ENCODE measurements at regions of chr1 and their contacts with region 1.

Region 1: GRCh38 chr1:172745014-172745413 is 86.1 kb downstream of the FASLG start:
- DNase-seq: no peak
- ATAC-seq: peak; percentile 50 to 64
- H3K4me3 ChIP-seq: no peak overlapping the region
- H3K27ac ChIP-seq: peak overlapping the region in 3 of 4 donors; percentile 63 to 71 (median 68)
- H3K4me1 ChIP-seq: no peaks in the 10 kb centered on the region
- H3K27me3 ChIP-seq: no peaks in the 10 kb centered on the region
- CTCF ChIP-seq: peak in 3 of 5 experiments; percentile 34 to 43 (median 37)
- POLR2A ChIP-seq: no peak

Region 2: GRCh38 chr1:172826096-172826743 is 81.2 kb after region 1 on chr1:
- in situ Hi-C with region 1: loop called in 2 of 4 experiments (anchors 5 to 10 kb)
- intact Hi-C with region 1: loop called (anchors 2 kb)
- DNase-seq: peak; percentile 32 to 37
- ATAC-seq: peak; percentile 73 to 81
- H3K4me3 ChIP-seq: peak overlapping the region in 2 of 4 donors; percentile 10 to 18
- H3K27ac ChIP-seq: peak overlapping the region; percentile 62 to 76 (median 66)
- H3K4me1 ChIP-seq: no peaks in the 10 kb centered on the region
- H3K27me3 ChIP-seq: no peaks in the 10 kb centered on the region
- CTCF ChIP-seq: peak in 3 of 5 experiments; percentile 29 to 43 (median 35)
- POLR2A ChIP-seq: peak in 1 of 2 donors; percentile 34

Region 3: GRCh38 chr1:173195596-173196088 is 450.6 kb after region 1 on chr1:
- in situ Hi-C with region 1: loop called (anchors 5 to 25 kb)
- intact Hi-C with region 1: no loop called
- DNase-seq: no peak
- ATAC-seq: no peak
- H3K4me3 ChIP-seq: no peak overlapping the region
- H3K27ac ChIP-seq: no peak overlapping the region
- H3K4me1 ChIP-seq: peaks cover 2 to 9% of the 10 kb centered on the region in 2 donors
- H3K27me3 ChIP-seq: no peaks in the 10 kb centered on the region
- CTCF ChIP-seq: no peak
- POLR2A ChIP-seq: no peak

Region 4: GRCh38 chr1:173202430-173203145 is 457.6 kb after region 1 on chr1:
- in situ Hi-C with region 1: loop called (anchors 5 to 25 kb)
- intact Hi-C with region 1: loop called (anchors 1 kb)
- DNase-seq: no peak
- ATAC-seq: peak in 1 of 2 donors; percentile 57
- H3K4me3 ChIP-seq: no peak overlapping the region
- H3K27ac ChIP-seq: no peak overlapping the region
- H3K4me1 ChIP-seq: no peaks in the 10 kb centered on the region
- H3K27me3 ChIP-seq: no peaks in the 10 kb centered on the region
- CTCF ChIP-seq: peak; percentile 15 to 54 (median 35)
- POLR2A ChIP-seq: no peak

Region 5: DNA sequence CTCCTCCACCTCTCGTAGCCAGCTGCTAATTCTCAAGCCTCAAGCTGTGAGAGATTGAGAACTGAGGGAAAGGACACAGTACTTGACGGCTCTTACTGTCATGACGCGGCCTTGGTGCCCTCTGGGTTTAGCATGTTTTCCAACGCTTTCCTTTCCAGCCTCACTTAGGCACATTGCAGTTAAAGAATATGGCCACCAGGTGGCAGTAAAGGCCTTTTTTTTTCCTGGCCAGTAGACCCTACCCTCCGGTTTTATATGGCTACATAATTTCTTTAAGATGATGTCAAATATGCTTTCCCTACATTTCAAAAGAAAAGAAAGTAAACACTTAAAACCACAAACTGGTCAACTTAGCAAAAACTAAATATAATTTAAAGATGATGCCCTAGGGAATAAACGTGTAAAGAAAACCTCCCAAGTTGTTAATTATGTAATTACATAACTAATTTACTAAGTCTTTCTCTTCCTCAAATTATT is 675.4 kb after region 1 on chr1:
- in situ Hi-C with region 1: loop called in 1 of 4 experiments (anchors 25 kb)
- intact Hi-C with region 1: loop called (anchors 10 kb)
- DNase-seq: peak in 1 of 2 donors; percentile 40
- ATAC-seq: peak; percentile 76 to 87
- H3K4me3 ChIP-seq: peak overlapping the region in 1 of 4 donors; percentile 8
- H3K27ac ChIP-seq: no peak overlapping the region
- H3K4me1 ChIP-seq: peaks cover 2 to 3% of the 10 kb centered on the region in 2 donors
- H3K27me3 ChIP-seq: no peaks in the 10 kb centered on the region
- CTCF ChIP-seq: peak; percentile 77 to 87 (median 82)
- POLR2A ChIP-seq: no peak

Region 6: DNA sequence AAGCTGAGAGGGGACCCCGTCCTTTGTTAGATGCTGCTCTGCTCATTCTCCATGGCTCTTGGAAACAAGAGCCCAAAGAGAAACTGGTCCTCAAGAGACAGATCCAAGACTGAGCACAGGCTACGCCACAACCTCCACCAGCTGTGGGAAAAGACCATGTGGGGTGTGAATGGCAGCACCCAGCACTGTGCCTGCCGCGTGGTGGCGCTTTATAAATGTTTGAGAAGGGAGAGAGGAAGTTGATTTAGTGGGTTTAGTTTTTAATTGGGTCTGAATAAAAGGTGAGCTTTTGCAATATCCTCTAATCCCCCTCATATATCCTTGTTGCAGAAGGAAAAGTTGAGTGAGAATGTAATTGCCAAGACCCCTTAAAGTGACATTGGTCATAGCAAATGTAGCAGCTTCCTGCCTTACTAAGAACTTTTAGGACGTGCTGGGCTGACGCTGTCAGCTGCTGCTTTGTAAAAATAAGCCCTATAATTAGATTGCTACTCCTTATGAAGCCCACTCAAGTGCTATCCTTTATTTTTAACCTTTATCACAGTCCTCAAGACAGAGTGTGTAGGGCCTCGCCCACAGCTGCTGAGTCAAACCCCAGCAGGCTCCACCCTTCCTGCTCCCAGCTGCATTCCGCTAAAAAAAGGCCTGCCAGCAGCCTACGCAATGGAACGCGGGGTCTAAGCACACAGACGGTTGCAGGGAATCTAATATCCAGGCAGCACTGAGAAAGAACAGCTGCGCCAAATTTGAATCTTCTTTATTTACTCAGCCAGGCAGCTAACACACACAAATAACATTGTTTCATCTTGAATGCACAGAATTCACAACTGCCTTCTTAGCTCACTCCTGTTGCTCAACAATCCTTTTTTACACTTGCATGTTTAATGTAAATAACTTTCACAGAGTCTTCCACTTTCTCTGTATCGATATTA is 684.7 kb after region 1 on chr1:
- in situ Hi-C with region 1: loop called in 1 of 4 experiments (anchors 25 kb)
- intact Hi-C with region 1: loop called (anchors 10 kb)
- DNase-seq: peak; percentile 63 to 75
- ATAC-seq: peak; percentile 76 to 80
- H3K4me3 ChIP-seq: peak overlapping the region; percentile 10 to 46 (median 40)
- H3K27ac ChIP-seq: peak overlapping the region; percentile 76 to 83 (median 82)
- H3K4me1 ChIP-seq: peaks cover 28 to 29% of the 10 kb centered on the region in 2 donors
- H3K27me3 ChIP-seq: no peaks in the 10 kb centered on the region
- CTCF ChIP-seq: peak; percentile 9 to 72 (median 58)
- POLR2A ChIP-seq: peak; percentile 11 to 18

Region 7: GRCh38 chr1:174743654-174744561 is 1998.9 kb after region 1 on chr1:
- in situ Hi-C with region 1: no loop called
- intact Hi-C with region 1: loop called (anchors 10 kb)
- DNase-seq: no peak
- ATAC-seq: peak in 1 of 2 donors; percentile 30
- H3K4me3 ChIP-seq: no peak overlapping the region
- H3K27ac ChIP-seq: no peak overlapping the region
- H3K4me1 ChIP-seq: no peaks in the 10 kb centered on the region
- H3K27me3 ChIP-seq: no peaks in the 10 kb centered on the region
- CTCF ChIP-seq: peak in 4 of 5 experiments; percentile 15 to 66 (median 48)
- POLR2A ChIP-seq: no peak